Heart right ventricle (tissue), 16 donors: ENCODE measurements at regions of chr2 and their contacts with region 1.

Region 1: DNA sequence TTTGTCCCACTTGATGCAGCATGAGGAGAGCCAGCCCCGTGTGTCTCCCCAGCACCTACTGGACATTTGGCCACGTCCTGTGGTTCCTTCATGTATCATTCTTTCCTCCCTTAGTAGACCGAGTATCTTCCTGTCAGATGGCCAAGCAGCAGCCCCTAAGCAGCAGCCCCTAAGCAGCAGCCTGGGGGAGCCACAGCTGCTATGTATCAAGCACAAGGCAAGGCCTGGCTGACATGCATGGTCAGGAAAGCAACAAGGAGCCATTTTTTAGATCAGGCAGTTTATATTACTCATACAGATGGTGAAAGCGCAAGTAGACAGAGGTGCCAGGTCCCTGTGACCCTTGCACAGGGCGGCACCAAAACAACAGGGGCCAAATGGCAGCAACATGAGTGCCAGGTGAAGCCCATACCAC is 22.1 kb downstream of the CHCHD5 start:
- DNase-seq: no peak
- ATAC-seq: no peak
- H3K4me3 ChIP-seq: no peak overlapping the region
- H3K27ac ChIP-seq: no peak overlapping the region
- H3K4me1 ChIP-seq: no peaks in the 10 kb centered on the region
- H3K27me3 ChIP-seq: no peaks in the 10 kb centered on the region
- CTCF ChIP-seq: no peak

Region 2: GRCh38 chr2:112626604-112627059 is 20.1 kb after region 1 on chr2:
- intact Hi-C with region 1: loop called in 1 of 10 experiments (anchors 2 kb)
- DNase-seq: peak; percentile 54 to 58
- ATAC-seq: peak; percentile 67 to 86 (median 78)
- H3K4me3 ChIP-seq: peak overlapping the region in 4 of 10 donors; percentile 2 to 33 (median 24)
- H3K27ac ChIP-seq: peak overlapping the region; percentile 32 to 88 (median 76)
- H3K4me1 ChIP-seq: peaks cover 0 to 86% (median 17%) of the 10 kb centered on the region in 9 donors
- H3K27me3 ChIP-seq: peaks cover 0 to 8% (median 0%) of the 10 kb centered on the region in 7 donors
- CTCF ChIP-seq: peak; percentile 70 to 92 (median 85)

Region 3: DNA sequence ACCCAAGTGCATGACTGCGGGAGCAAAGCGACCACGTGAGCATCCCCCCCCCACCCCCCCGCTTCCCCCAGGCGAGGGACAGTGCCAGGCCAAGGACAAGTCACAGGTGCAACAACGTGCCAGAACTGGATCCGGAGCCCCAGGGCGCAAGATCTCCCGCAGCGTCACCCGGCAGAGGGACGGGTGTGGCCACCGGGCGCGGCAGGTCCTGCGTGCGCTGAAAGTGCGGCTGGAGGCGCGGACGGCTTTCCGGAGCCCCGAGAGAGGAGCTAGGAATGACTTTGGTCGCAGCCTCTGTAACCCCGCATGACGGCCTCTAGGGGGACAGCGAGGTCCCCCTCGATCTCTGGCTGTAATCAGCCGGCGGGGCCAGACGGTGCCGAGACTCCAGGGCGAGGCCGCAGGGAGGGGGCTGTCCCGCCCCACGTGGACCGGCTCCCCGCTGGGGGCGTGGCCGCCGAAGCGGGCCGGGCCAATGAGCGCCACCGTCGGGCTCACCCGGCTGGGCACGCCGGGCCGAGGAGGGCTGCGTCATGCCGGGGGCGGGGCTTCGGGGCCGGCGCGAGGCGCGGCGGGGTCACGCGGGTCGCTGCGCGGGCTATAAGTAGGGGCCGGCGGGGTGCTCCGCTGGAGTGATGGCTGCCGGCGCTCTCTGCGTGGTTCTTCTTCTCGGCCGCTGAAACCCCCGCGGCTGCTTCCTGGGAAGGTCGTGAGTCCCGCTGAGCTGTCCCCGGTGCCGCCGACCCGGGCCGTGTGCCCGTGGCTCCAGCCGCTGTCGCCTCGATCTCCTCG is 39.0 kb after region 1 on chr2 and contains the start of gene SLC20A1:
- intact Hi-C with region 1: loop called in 1 of 10 experiments (anchors 5 kb)
- DNase-seq: peak; percentile 93 to 98
- ATAC-seq: peak; percentile 97 to 99 (median 98)
- H3K4me3 ChIP-seq: peak within 1 kb of the TSS; percentile 71 to 98 (median 88)
- H3K27ac ChIP-seq: peak within 1 kb of the TSS; percentile 94 to 99 (median 98)
- H3K4me1 ChIP-seq: peaks cover 4 to 84% (median 44%) of the 10 kb centered on the region in 9 donors
- H3K27me3 ChIP-seq: no peaks in the 10 kb centered on the region
- CTCF ChIP-seq: peak in 8 of 9 donors; percentile 37 to 63 (median 42)
- total RNA-seq, gene SLC20A1: 10.8 to 21.3 (median 13.2) TPM

Region 4: GRCh38 chr2:112661656-112662305 is 55.3 kb after region 1 on chr2:
- intact Hi-C with region 1: no loop called
- DNase-seq: no peak
- ATAC-seq: no peak
- H3K4me3 ChIP-seq: no peak overlapping the region
- H3K27ac ChIP-seq: no peak overlapping the region
- H3K4me1 ChIP-seq: peaks cover 0 to 36% (median 0%) of the 10 kb centered on the region in 9 donors
- H3K27me3 ChIP-seq: no peaks in the 10 kb centered on the region
- CTCF ChIP-seq: no peak

Region 5: DNA sequence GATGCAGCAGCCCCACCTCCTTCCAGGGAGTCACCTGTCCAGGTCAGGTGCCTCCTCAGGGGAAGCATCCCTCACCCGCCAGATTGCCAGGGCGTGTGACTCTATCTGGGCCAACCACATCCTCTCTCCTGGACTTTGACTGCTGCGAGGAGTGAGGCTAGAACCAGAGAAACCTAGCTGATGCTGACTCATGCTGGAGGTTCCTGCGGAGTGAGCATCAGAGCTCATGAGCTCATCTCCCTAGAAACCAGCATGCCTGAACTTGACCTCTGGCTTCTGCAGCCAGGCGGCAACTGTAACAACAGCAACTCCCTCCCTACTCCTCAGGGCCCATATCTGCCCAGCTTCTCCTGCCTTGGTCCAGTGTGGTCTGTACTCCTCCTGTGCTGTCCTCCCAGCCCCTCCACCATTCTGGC is 86.0 kb after region 1 on chr2:
- intact Hi-C with region 1: loop called in 1 of 10 experiments (anchors 5 kb)
- DNase-seq: no peak
- ATAC-seq: peak; percentile 23 to 71 (median 55)
- H3K4me3 ChIP-seq: no peak overlapping the region
- H3K27ac ChIP-seq: peak overlapping the region in 3 of 10 donors; percentile 19 to 79 (median 34)
- H3K4me1 ChIP-seq: peaks cover 0 to 33% (median 0%) of the 10 kb centered on the region in 9 donors
- H3K27me3 ChIP-seq: no peaks in the 10 kb centered on the region
- CTCF ChIP-seq: no peak

Region 6: DNA sequence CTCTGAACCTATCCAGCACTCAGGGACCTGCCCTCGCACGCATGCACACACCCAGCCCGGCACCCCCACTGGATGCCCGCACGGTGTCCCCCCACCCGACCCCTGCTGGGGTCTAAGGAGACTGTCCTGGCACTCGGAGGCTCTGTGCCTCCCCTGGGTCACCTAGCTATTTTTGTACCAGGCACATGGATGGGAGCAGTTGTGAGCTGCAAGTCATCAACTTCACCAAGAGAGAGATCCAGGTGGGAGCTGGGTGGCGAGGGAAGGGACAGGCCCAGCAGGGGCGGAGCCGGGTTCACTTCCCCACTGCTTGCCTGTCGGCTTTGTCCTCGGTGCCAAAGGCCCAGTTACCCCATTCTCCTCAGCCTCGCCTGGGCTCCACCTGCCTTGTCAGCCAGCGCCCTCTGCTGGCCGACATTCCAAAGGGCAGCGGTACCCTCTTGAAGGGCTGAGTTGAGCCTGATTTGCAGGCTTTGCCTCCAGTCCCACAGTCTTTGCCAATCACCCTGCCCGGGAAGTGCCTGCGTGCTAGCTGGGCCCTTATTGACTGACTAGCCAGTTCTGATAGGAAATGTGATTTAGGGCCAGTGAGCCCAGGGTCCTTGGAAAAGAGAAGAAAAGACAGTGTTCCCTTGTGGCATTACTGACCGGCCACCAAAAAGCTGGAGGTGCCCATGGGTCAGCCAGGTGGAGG is 120.1 kb after region 1 on chr2:
- intact Hi-C with region 1: loop called in 7 of 10 experiments (anchors 2 to 5 kb)
- DNase-seq: peak; percentile 86 to 87
- ATAC-seq: peak; percentile 88 to 96 (median 93)
- H3K4me3 ChIP-seq: no peak overlapping the region
- H3K27ac ChIP-seq: peak overlapping the region in 1 of 10 donors; percentile 5
- H3K4me1 ChIP-seq: peaks cover 0 to 36% (median 4%) of the 10 kb centered on the region in 9 donors
- H3K27me3 ChIP-seq: peaks cover 0 to 27% (median 5%) of the 10 kb centered on the region in 7 donors
- CTCF ChIP-seq: peak; percentile 89 to 99 (median 97)

Region 7: DNA sequence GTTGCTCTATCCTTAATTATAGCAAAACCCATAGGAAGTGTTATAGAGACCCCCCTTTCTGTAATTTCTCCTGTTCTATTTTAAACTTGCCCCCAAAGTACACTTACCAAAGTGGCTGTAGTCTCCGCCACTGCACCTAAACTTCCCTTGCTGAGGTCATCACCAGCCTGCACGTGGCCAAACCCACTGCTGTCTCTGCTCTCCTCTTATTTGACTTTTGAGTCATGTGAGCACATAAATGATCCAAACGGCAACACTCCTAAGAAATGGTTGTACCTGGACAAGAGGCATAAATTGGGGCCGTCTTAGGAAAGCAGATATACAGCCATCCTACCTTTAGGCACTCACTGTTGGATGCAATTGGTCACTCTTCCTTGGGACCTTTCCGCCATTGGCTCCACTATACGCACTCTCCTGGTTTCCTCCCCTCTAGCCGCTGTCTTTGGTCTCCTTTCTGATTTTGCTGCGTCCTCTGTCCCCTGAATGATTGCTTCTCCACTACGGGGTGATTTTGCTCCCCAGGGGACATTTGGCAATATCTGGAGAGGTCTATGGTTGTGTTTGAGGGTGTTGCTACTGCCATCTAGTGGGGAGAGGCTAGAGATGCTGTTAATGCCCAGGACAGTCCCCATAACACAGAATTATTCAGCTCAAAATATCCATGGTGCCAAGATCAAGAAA is 352.1 kb after region 1 on chr2:
- intact Hi-C with region 1: loop called in 1 of 10 experiments (anchors 10 kb)
- DNase-seq: peak in 1 of 2 donors; percentile 23
- ATAC-seq: peak in 3 of 8 donors; percentile 56 to 73 (median 62)
- H3K4me3 ChIP-seq: no peak overlapping the region
- H3K27ac ChIP-seq: no peak overlapping the region
- H3K4me1 ChIP-seq: no peaks in the 10 kb centered on the region
- H3K27me3 ChIP-seq: peaks cover 0 to 25% (median 13%) of the 10 kb centered on the region in 7 donors
- CTCF ChIP-seq: peak; percentile 48 to 83 (median 75)

Region 8: GRCh38 chr2:113084241-113085000 is 477.9 kb after region 1 on chr2:
- intact Hi-C with region 1: no loop called
- DNase-seq: no peak
- ATAC-seq: no peak
- H3K4me3 ChIP-seq: no peak overlapping the region
- H3K27ac ChIP-seq: no peak overlapping the region
- H3K4me1 ChIP-seq: no peaks in the 10 kb centered on the region
- H3K27me3 ChIP-seq: peaks cover 0 to 17% (median 0%) of the 10 kb centered on the region in 7 donors
- CTCF ChIP-seq: peak in 6 of 9 donors; percentile 17 to 49 (median 30)